Vagina (tissue), 2 donors: ENCODE measurements at regions of chr1 and their contacts with region 1.

Region 1: DNA sequence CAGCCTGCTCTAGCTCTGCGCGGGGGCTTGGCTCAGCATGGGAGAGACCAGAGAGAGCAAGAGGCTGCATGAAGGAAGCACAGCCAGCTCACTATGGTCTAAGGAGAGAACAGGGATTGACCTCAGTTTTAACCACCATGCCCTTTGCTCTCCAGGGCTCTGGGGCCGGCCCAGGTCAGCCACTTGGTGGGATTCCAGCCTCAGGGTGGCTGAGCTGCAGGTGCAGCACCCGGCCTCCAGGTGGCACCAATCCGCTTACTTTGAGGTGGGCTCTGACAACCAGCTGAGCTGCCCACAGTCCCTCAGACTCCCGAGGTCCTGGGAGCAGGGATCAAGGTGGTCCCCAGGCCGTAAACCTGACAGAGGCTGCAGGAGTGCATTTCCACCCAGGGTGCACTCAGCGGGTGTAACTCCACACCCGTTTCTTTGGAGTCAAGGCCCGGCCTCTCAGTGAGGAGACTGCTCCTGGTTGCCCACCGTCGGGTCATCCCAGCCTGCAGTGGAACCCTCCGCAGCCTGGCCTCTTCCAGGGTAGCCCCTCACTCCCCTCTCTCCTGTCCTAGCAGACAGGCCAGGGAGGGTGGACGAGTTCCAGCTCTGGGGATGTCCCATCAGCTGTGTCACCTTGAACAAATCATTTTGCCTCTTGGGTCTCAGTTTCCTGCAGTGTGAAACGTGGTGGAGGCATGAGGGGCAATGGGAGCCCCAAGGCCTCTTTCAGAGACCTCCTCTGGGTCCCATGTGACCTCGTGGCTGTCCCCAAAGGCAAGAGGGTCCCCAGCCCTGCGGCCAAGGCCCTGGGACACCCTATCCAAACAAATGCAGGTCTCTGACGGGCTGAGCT is 607 bp upstream of the LGR6 start:
- DNase-seq: no peak
- H3K4me3 ChIP-seq: peak overlapping the region in 1 of 2 donors; percentile 28
- H3K27ac ChIP-seq: no peak overlapping the region
- H3K4me1 ChIP-seq: peaks cover 11% of the 10 kb centered on the region
- H3K27me3 ChIP-seq: no peaks in the 10 kb centered on the region
- CTCF ChIP-seq: peak; percentile 48 to 62 (median 62)
- POLR2A ChIP-seq: no peak

Region 2: GRCh38 chr1:202315576-202316168 is 122.7 kb after region 1 on chr1:
- intact Hi-C with region 1: loop called (anchors 1 kb)
- DNase-seq: peak in 1 of 2 donors; percentile 85
- H3K4me3 ChIP-seq: no peak overlapping the region
- H3K27ac ChIP-seq: no peak overlapping the region
- H3K4me1 ChIP-seq: peaks cover 6% of the 10 kb centered on the region
- H3K27me3 ChIP-seq: no peaks in the 10 kb centered on the region
- CTCF ChIP-seq: peak; percentile 72 to 90 (median 76)
- POLR2A ChIP-seq: no peak